Activated T-helper 1 cell treated with anti-CD3 and anti-CD28 coated beads, Interleukin-12 subunit alpha, Interleukin-12 subunit beta, Interleukin-2, Interleukin-4 antibody, amounts not matched to agents 30 ng/mL and 10 ng/mL and 1 ng/mL, durations not matched to agents 14 hours and 24 hours and 36 hours (primary cell): ENCODE measurements at regions of chr1 and their contacts with region 1.

Region 1: GRCh38 chr1:66331657-66332547 is 202.1 kb upstream of the SGIP1 start:
- DNase-seq: peak; percentile 35
- H3K4me3 Mint-ChIP-seq: peak overlapping the region; percentile 98
- H3K27ac Mint-ChIP-seq: peak overlapping the region; percentile 95
- H3K4me1 Mint-ChIP-seq: peaks cover 60% of the 10 kb centered on the region
- H3K27me3 Mint-ChIP-seq: no peaks in the 10 kb centered on the region

Region 2: GRCh38 chr1:66239834-66240233 is 92.1 kb before region 1 on chr1:
- intact Hi-C with region 1: no loop called
- DNase-seq: no peak
- H3K4me3 Mint-ChIP-seq: no peak overlapping the region
- H3K27ac Mint-ChIP-seq: no peak overlapping the region
- H3K4me1 Mint-ChIP-seq: no peaks in the 10 kb centered on the region
- H3K27me3 Mint-ChIP-seq: peaks cover 8% of the 10 kb centered on the region

Region 3: GRCh38 chr1:66258404-66259105 is 73.3 kb before region 1 on chr1:
- intact Hi-C with region 1: loop called (anchors 1 kb)
- DNase-seq: no peak
- H3K4me3 Mint-ChIP-seq: no peak overlapping the region
- H3K27ac Mint-ChIP-seq: peak overlapping the region; percentile 53
- H3K4me1 Mint-ChIP-seq: peaks cover 83% of the 10 kb centered on the region
- H3K27me3 Mint-ChIP-seq: peaks cover 2% of the 10 kb centered on the region

Region 4: GRCh38 chr1:66300972-66301451 is 30.9 kb before region 1 on chr1:
- intact Hi-C with region 1: loop called (anchors 1 kb)
- DNase-seq: peak; percentile 48
- H3K4me3 Mint-ChIP-seq: peak overlapping the region; percentile 80
- H3K27ac Mint-ChIP-seq: peak overlapping the region; percentile 94
- H3K4me1 Mint-ChIP-seq: peaks cover 47% of the 10 kb centered on the region
- H3K27me3 Mint-ChIP-seq: no peaks in the 10 kb centered on the region

Region 5: GRCh38 chr1:66399888-66400529 is 68.1 kb after region 1 on chr1:
- intact Hi-C with region 1: loop called (anchors 2 kb)
- DNase-seq: no peak
- H3K4me3 Mint-ChIP-seq: peak overlapping the region; percentile 67
- H3K27ac Mint-ChIP-seq: peak overlapping the region; percentile 88
- H3K4me1 Mint-ChIP-seq: peaks cover 47% of the 10 kb centered on the region
- H3K27me3 Mint-ChIP-seq: no peaks in the 10 kb centered on the region

Region 6: GRCh38 chr1:66924756-66925557 is 593.1 kb after region 1 on chr1 and contains the starts of genes DNAI4 and MIER1:
- intact Hi-C with region 1: loop called (anchors 2 kb)
- DNase-seq: peak; percentile 98
- H3K4me3 Mint-ChIP-seq: peak within 1 kb of the TSS; percentile 93
- H3K27ac Mint-ChIP-seq: peak within 1 kb of the TSS; percentile 97
- H3K4me1 Mint-ChIP-seq: peaks cover 66% of the 10 kb centered on the region
- H3K27me3 Mint-ChIP-seq: no peaks in the 10 kb centered on the region
- total RNA-seq, gene DNAI4: 1.2 and 3.2 TPM in 2 replicates
- total RNA-seq, gene MIER1: 53.2 and 57.4 TPM in 2 replicates

Region 7: GRCh38 chr1:67339623-67340343 is 1007.9 kb after region 1 on chr1:
- intact Hi-C with region 1: loop called (anchors 10 kb)
- DNase-seq: peak; percentile 47
- H3K4me3 Mint-ChIP-seq: peak overlapping the region; percentile 66
- H3K27ac Mint-ChIP-seq: peak overlapping the region; percentile 90
- H3K4me1 Mint-ChIP-seq: peaks cover 80% of the 10 kb centered on the region
- H3K27me3 Mint-ChIP-seq: no peaks in the 10 kb centered on the region